Activated CD8-positive, alpha-beta T cell treated with anti-CD3 and anti-CD28 coated beads, Interleukin-2, amount 10 ng/mL, durations not matched to agents 7 days and 5 days (primary cell): ENCODE measurements at regions of chr1 and their contacts with region 1.

Region 1: GRCh38 chr1:156383023-156383422 is 14.0 kb downstream of the RHBG start:
- DNase-seq: peak; percentile 72
- ATAC-seq: peak; percentile 82
- H3K4me3 Mint-ChIP-seq: no peak overlapping the region
- H3K27ac Mint-ChIP-seq: no peak overlapping the region
- H3K4me1 Mint-ChIP-seq: peaks cover 10% of the 10 kb centered on the region
- H3K27me3 Mint-ChIP-seq: peaks cover 15% of the 10 kb centered on the region

Region 2: GRCh38 chr1:156154317-156154749 is 228.7 kb before region 1 on chr1:
- CTCF ChIA-PET with region 1: no interaction called
- POLR2A ChIA-PET with region 1: no interaction called
- DNase-seq: peak; percentile 77
- ATAC-seq: peak; percentile 93
- H3K4me3 Mint-ChIP-seq: peak overlapping the region; percentile 81
- H3K27ac Mint-ChIP-seq: peak overlapping the region; percentile 74
- H3K4me1 Mint-ChIP-seq: peaks cover 84% of the 10 kb centered on the region
- H3K27me3 Mint-ChIP-seq: no peaks in the 10 kb centered on the region

Region 3: GRCh38 chr1:156295391-156295947 is 87.6 kb before region 1 on chr1 and contains the start of gene GLMP:
- CTCF ChIA-PET with region 1: no interaction called
- POLR2A ChIA-PET with region 1: no interaction called
- DNase-seq: peak; percentile 79
- ATAC-seq: peak; percentile 90
- H3K4me3 Mint-ChIP-seq: peak within 1 kb of the TSS; percentile 91
- H3K27ac Mint-ChIP-seq: peak within 1 kb of the TSS; percentile 83
- H3K4me1 Mint-ChIP-seq: peaks cover 19% of the 10 kb centered on the region
- H3K27me3 Mint-ChIP-seq: no peaks in the 10 kb centered on the region
- total RNA-seq, gene GLMP: 27.7 to 29.8 TPM

Region 4: DNA sequence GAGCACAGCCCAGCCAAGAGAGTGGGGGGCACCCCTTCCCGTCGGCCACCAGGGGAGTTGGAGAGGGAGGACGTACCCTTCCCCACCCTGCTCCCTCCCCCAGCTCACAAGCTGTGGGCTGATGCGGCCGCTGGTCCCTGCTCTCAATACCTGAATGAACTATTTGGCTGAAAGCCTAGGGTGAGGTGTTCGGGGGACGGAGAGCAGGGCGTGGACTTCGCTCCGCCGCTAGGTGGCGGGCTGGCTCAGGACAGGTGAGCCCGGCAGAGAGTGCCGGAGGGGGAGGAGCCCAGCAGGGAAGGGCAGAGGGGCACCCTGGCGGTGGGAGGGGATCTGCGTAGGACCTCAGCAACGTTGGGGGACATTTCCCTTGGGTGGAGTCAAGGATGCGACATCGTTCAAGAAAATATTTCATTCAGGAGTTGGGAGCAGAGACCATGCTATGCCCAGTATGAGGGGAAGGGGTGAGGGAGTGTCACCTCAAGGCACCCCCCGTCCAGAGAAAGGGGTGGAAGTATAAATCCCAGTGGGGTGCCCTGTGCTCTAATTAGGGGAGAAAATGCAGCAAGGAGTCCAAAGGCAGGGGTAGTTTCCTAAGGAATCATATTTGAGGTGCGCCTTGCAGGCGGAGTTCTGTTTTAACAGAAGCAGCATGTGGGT is 26.0 kb before region 1 on chr1:
- CTCF ChIA-PET with region 1: interaction called, 21 read pairs
- POLR2A ChIA-PET with region 1: no interaction called
- DNase-seq: peak; percentile 75
- ATAC-seq: peak; percentile 99
- H3K4me3 Mint-ChIP-seq: no peak overlapping the region
- H3K27ac Mint-ChIP-seq: no peak overlapping the region
- H3K4me1 Mint-ChIP-seq: peaks cover 6% of the 10 kb centered on the region
- H3K27me3 Mint-ChIP-seq: peaks cover 31% of the 10 kb centered on the region

Region 5: GRCh38 chr1:156414461-156415064 is 31.5 kb after region 1 on chr1:
- CTCF ChIA-PET with region 1: interaction called, 44 read pairs
- POLR2A ChIA-PET with region 1: no interaction called
- DNase-seq: peak; percentile 53
- ATAC-seq: no peak
- H3K4me3 Mint-ChIP-seq: no peak overlapping the region
- H3K27ac Mint-ChIP-seq: no peak overlapping the region
- H3K4me1 Mint-ChIP-seq: peaks cover under 1% of the 10 kb centered on the region
- H3K27me3 Mint-ChIP-seq: peaks cover 53% of the 10 kb centered on the region

Region 6: DNA sequence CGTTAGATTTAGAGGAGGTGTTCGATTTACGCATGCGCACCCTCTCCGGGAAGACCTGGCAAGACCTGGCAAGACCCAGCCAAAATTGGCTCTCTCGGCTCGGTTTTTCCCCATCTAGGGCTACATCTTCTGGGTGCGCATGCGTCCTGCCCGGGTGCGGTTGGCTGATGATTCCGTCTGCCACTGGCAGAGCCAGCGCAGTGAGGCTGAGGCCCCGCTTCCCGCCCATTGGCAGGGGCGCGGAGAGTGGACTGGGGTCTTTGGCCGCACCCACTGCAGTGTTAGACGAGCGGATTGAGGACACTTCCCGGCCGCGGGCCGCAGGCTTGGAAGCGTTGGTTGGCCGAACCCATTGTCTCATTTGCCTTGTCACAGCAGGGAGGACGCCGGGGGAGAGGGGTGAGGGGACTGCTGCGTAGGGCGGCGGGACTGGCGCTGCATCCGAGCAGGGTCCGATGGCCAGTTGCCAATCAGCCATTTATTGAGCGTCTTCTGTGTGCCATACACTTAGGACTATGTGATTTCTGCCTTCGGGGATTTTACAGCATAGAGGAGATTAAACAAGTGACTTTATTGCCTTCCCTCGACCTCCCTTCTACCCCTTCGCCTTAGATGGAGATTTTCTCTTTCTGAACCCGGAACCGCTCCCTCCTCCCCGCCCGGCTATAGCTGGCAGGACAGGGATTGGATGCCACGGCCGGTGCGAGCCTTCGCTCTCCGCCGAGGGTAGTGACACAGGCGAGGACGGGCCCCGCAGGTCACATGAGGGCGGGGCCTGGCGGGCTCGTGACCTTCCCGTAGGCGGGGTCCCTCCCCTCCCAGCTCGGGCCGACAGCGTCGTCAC is 73.8 kb after region 1 on chr1:
- CTCF ChIA-PET with region 1: interaction called, 562 read pairs
- POLR2A ChIA-PET with region 1: no interaction called
- DNase-seq: peak; percentile 97
- ATAC-seq: peak; percentile 88
- H3K4me3 Mint-ChIP-seq: peak overlapping the region; percentile 84
- H3K27ac Mint-ChIP-seq: peak overlapping the region; percentile 95
- H3K4me1 Mint-ChIP-seq: peaks cover 18% of the 10 kb centered on the region
- H3K27me3 Mint-ChIP-seq: peaks cover 15% of the 10 kb centered on the region

Region 7: GRCh38 chr1:156524481-156524869 is 141.5 kb after region 1 on chr1:
- CTCF ChIA-PET with region 1: interaction called, 17 read pairs
- POLR2A ChIA-PET with region 1: no interaction called
- DNase-seq: peak; percentile 62
- ATAC-seq: peak; percentile 76
- H3K4me3 Mint-ChIP-seq: peak overlapping the region; percentile 60
- H3K27ac Mint-ChIP-seq: peak overlapping the region; percentile 92
- H3K4me1 Mint-ChIP-seq: peaks cover 48% of the 10 kb centered on the region
- H3K27me3 Mint-ChIP-seq: no peaks in the 10 kb centered on the region

Region 8: DNA sequence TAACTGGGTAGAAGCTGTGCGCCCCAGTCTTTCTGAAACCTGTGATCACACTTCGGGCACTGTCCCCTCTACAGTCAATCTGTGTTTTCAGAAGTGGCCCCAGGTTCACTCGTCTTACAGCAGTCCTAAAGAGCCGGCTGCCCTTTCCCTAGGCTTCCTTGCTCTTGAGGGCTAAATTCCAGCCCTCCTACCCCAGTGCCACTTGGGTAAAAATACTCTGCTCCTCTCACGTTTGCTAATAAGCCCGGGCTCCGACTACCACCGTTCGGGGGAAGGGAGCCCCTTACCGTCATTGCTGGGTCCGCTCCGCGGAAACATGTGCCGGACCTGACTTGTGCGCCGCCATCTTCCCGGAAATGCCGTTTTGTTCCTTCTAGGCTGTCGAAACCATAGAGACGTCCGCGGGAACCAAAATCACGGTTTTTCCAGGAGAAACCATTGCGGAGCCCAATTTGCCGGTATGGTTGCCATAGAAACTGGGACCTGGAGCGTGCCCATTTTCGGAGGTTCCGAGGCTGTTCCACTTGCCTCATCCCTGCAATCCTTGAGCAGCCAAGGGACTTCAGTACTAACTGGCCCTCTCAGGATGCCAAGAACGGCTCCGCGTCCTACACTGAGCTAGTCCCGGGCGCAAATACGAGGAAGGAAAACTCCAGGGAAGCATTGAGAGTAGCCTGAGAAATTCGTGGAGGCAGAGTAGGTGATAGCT is 218.3 kb after region 1 on chr1 and contains the start of gene GPATCH4:
- CTCF ChIA-PET with region 1: interaction called, 19 read pairs
- POLR2A ChIA-PET with region 1: no interaction called
- DNase-seq: peak; percentile 92
- ATAC-seq: peak; percentile 84
- H3K4me3 Mint-ChIP-seq: peak within 1 kb of the TSS; percentile 98
- H3K27ac Mint-ChIP-seq: peak within 1 kb of the TSS; percentile 96
- H3K4me1 Mint-ChIP-seq: peaks cover 37% of the 10 kb centered on the region
- H3K27me3 Mint-ChIP-seq: no peaks in the 10 kb centered on the region
- total RNA-seq, gene GPATCH4: 43.9 to 44.7 TPM

Region 9: GRCh38 chr1:156641761-156642264 is 258.8 kb after region 1 on chr1 and contains the start of gene BCAN:
- CTCF ChIA-PET with region 1: interaction called, 15 read pairs
- POLR2A ChIA-PET with region 1: no interaction called
- DNase-seq: no peak
- ATAC-seq: peak; percentile 30
- H3K4me3 Mint-ChIP-seq: peak within 1 kb of the TSS; percentile 29
- H3K27ac Mint-ChIP-seq: no peak within 1 kb of the TSS
- H3K4me1 Mint-ChIP-seq: peaks cover 37% of the 10 kb centered on the region
- H3K27me3 Mint-ChIP-seq: peaks cover 77% of the 10 kb centered on the region
- total RNA-seq, gene BCAN: not detected